Heart right ventricle (tissue), 16 donors: ENCODE measurements at regions of chr3 and their contacts with region 1.

Region 1: GRCh38 chr3:57755668-57756527 is at the start of gene SLMAP:
- DNase-seq: peak; percentile 95 to 98
- ATAC-seq: peak; percentile 99
- H3K4me3 ChIP-seq: peak within 1 kb of the TSS; percentile 66 to 95 (median 90)
- H3K27ac ChIP-seq: peak within 1 kb of the TSS; percentile 35 to 91 (median 90)
- H3K4me1 ChIP-seq: peaks cover 2 to 40% (median 35%) of the 10 kb centered on the region in 9 donors
- H3K27me3 ChIP-seq: no peaks in the 10 kb centered on the region
- CTCF ChIP-seq: no peak
- total RNA-seq, gene SLMAP: 198 to 724 (median 431) TPM

Region 2: DNA sequence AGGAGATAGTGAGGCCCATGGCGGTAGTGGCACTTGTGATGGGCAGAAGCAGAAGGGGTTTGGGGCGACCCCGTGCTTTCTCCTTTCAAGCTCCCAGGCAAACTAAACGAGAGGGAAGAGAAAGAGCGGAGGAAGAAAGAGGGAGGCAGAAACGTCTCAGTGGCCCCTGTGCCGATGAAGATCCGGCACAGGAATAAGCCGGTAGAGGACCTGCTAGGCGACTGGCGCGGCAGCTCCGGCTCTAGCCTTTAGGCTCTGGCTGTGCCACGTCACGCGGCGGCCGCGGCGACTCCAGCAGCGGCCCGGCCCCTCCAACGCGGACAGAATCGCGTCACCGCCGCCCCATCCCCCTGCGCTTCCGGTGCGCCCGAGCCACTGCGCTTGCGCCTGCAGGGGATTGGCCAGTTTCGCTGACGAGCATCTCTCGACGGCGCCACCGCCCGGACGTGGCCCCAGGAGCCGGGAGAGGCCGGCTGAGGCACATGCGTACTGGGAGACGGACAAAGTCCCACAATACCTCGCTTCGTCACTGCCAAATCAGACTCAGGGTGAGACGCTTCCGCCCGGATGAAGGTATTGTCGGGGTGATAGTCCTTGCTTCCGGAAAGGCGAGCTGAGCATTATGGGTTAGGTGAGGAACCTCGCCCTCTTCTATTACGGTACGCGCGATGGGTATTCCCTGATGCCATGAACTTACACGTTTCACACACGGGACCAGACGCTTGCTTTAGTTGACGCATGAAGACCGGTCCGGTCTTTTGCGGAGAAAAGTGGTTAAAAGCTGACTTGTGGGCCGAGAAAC is 158.6 kb before region 1 on chr3 and contains the start of gene ARF4:
- intact Hi-C with region 1: loop called in 2 of 10 experiments (anchors 5 kb)
- DNase-seq: peak; percentile 99 to 100
- ATAC-seq: peak; percentile 96 to 97 (median 96)
- H3K4me3 ChIP-seq: peak within 1 kb of the TSS; percentile 67 to 97 (median 86)
- H3K27ac ChIP-seq: peak within 1 kb of the TSS; percentile 84 to 99 (median 96)
- H3K4me1 ChIP-seq: peaks cover 5 to 60% (median 51%) of the 10 kb centered on the region in 9 donors
- H3K27me3 ChIP-seq: no peaks in the 10 kb centered on the region
- CTCF ChIP-seq: peak in 6 of 9 donors; percentile 5 to 59 (median 37)
- total RNA-seq, gene ARF4: 56.4 to 83.3 (median 73.7) TPM

Region 3: GRCh38 chr3:57646723-57647122 is 109.2 kb before region 1 on chr3:
- intact Hi-C with region 1: no loop called
- DNase-seq: peak in 1 of 2 donors; percentile 15
- ATAC-seq: peak; percentile 76 to 94 (median 86)
- H3K4me3 ChIP-seq: no peak overlapping the region
- H3K27ac ChIP-seq: peak overlapping the region in 4 of 10 donors; percentile 13 to 56 (median 42)
- H3K4me1 ChIP-seq: peaks cover 0 to 15% (median 6%) of the 10 kb centered on the region in 9 donors
- H3K27me3 ChIP-seq: no peaks in the 10 kb centered on the region
- CTCF ChIP-seq: peak in 6 of 9 donors; percentile 34 to 59 (median 52)

Region 4: DNA sequence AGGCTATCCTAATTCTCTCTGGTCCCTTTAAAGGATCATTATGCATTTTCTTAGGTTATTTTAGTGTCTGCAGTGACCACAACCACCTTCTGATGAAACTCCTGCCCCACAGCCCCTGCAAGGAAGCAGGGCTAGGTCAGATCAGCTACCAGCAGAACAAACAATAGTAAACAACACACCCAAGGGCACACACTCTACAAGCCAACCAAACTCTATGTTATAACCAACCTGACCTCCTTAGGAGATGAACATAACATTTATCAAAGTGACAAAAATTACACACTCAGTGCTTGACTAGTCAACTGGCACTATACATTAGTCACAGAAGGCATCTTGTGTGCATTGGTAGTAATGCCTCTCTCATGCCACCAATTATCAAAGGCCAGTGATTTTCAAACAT is 80.4 kb before region 1 on chr3:
- intact Hi-C with region 1: loop called in 1 of 10 experiments (anchors 5 kb)
- DNase-seq: no peak
- ATAC-seq: no peak
- H3K4me3 ChIP-seq: no peak overlapping the region
- H3K27ac ChIP-seq: peak overlapping the region in 1 of 10 donors; percentile 24
- H3K4me1 ChIP-seq: peaks cover 0 to 58% (median 19%) of the 10 kb centered on the region in 9 donors
- H3K27me3 ChIP-seq: no peaks in the 10 kb centered on the region
- CTCF ChIP-seq: no peak

Region 5: DNA sequence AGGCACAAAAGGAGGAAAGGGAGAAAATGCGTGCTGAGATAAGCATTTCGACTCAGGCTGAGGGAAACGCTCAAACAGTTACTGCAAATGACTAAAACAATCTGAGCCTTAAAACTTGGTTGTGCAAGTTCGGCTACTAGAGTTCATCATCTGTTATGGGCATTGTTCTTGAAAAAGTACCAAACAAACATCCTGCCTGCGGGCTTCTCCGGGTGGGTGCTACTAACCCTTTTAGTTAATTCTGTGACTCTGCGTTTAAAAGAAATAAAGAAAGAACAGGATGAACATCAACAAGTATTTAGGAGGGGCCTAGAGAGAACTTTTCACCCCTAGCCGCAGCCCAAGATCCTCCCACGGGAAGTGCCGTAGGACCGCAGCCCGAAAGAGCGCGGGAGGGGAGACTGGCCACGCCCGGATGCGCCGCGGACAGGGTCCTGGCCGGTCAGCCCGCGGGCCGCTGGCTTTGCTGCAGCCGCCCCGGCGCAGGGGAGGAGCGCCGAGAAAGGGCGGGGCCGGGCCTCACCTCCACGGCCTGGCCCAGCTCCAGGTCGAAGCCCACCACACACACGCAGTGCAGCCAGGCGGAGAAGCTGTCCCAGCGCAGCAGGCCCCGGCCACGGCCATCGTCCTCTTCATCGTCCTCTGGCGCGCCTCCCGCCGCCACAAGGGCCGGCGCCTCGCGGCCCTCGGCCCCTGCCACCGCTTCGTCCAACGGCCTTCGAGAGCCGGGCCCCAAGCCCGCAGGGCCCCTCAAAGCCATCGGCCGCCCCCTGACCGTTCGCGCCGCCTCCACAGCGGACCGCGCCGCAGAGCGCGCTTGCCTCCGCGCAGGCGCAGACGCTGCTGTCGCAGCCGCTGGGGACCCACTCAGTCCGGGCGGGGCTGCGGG is 63.4 kb before region 1 on chr3 and contains the start of gene DENND6A:
- intact Hi-C with region 1: loop called in 8 of 10 experiments (anchors 1 to 10 kb)
- DNase-seq: peak; percentile 96 to 98
- ATAC-seq: peak; percentile 94 to 99 (median 97)
- H3K4me3 ChIP-seq: peak within 1 kb of the TSS; percentile 70 to 100 (median 92)
- H3K27ac ChIP-seq: peak within 1 kb of the TSS; percentile 97 to 100 (median 99)
- H3K4me1 ChIP-seq: peaks cover 4 to 48% (median 40%) of the 10 kb centered on the region in 9 donors
- H3K27me3 ChIP-seq: no peaks in the 10 kb centered on the region
- CTCF ChIP-seq: peak in 2 of 9 donors; percentile 6 to 12
- total RNA-seq, gene DENND6A: 13.0 to 28.9 (median 20.0) TPM

Region 6: DNA sequence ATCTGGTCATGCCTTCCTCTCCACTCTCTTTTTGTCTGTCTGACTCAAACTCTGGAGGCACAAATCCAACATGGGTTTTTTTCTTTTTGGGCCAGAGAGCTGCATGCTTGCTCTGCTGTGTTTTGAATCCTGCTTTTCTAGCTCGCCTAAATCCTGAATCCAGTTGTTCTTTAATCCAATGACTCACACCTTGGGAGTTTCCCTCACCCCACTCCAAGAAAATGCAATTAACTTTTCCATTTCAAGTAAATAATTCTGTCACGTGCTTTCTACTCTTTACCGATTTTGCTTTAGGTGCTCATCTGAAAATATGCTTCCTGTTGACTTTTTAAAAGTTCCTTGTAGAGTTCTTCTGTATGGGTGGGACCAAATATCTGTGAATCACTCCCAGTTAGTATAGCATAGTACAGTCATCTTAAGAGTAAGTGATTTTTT is 47.8 kb after region 1 on chr3:
- intact Hi-C with region 1: loop called in 1 of 10 experiments (anchors 5 kb)
- DNase-seq: peak in 1 of 2 donors; percentile 32
- ATAC-seq: peak; percentile 73 to 87 (median 82)
- H3K4me3 ChIP-seq: peak overlapping the region in 1 of 10 donors; percentile 2
- H3K27ac ChIP-seq: peak overlapping the region in 5 of 10 donors; percentile 0 to 45 (median 25)
- H3K4me1 ChIP-seq: peaks cover 0 to 53% (median 48%) of the 10 kb centered on the region in 9 donors
- H3K27me3 ChIP-seq: no peaks in the 10 kb centered on the region
- CTCF ChIP-seq: no peak

Region 7: DNA sequence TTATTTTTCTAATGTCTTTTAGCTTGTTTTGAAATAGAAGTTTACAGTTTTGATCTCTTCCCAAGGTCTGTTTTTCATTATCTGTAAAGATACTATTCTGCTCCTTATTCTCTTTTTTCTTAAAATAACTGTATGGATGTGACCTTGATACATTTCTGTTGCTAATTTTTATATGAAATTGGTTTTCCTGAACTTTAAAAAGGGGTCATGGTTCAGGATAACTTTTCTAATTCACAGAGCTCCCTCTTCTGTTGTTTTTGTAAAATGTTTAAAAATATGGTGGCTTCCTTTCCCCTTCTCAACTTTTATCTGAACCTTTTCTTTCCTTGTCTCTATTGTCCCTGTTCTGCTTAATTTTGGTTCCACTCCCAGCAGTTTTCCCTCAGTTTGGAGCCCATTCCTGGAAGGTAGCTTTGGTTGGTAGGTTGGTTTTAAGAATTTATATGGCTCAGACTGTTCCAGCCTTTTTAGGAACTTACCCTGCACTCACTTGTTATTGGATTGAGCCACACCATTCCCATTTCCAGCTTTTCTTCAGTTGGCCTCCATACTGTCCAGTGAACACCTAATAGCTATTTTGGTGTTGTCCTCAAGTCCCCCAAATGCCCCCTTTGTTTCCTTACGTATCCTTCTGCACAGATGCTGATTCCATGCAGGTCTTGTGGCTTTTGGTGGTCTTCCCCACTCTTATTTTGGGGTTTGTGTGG is 70.5 kb after region 1 on chr3:
- intact Hi-C with region 1: loop called in 2 of 10 experiments (anchors 5 to 10 kb)
- DNase-seq: no peak
- ATAC-seq: no peak
- H3K4me3 ChIP-seq: no peak overlapping the region
- H3K27ac ChIP-seq: no peak overlapping the region
- H3K4me1 ChIP-seq: peaks cover 4 to 44% (median 33%) of the 10 kb centered on the region in 9 donors
- H3K27me3 ChIP-seq: no peaks in the 10 kb centered on the region
- CTCF ChIP-seq: peak in 6 of 9 donors; percentile 16 to 59 (median 46)